ENCODE measurements at regions of chr6 and their contacts with region 1.

Region 1: DNA sequence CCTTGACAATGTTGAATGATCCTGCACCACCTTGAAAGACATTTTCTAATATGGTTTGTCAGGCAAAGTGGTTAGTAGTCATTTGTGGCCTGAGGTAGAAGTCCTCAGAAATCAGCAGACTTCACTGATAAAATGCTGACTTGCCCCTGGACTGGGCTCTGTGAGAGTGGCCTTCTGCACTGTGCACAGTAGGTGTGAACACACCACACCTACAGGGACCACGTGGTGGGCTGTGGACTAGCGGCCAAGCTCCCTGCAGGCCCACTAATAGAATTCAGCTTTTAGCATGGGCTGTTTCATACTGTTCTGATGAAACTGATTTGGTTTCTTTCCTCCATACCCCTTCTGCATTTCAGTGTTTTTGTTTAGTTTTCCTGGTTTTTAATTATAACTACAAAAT is 7.3 kb downstream of the BPHL start:
- DNase-seq: no peak
- ATAC-seq: no peak
- H3K4me3 ChIP-seq: no peak overlapping the region
- H3K27ac ChIP-seq: no peak overlapping the region
- H3K4me1 ChIP-seq: peaks cover 0 to 3% of the 10 kb centered on the region in 2 experiments; a peak in 2 of 4 replicates
- H3K27me3 ChIP-seq: no peaks in the 10 kb centered on the region
- CTCF ChIP-seq: no peak
- POLR2A ChIP-seq: no peak
- RAD21 ChIP-seq: no peak

Region 2: GRCh38 chr6:3209114-3210023 is 83.6 kb after region 1 on chr6:
- CTCF ChIA-PET with region 1: interaction called, 3 read pairs
- POLR2A ChIA-PET with region 1: no interaction called
- RAD21 ChIA-PET with region 1: no interaction called
- intact Hi-C with region 1: loop called (anchors 1 kb)
- DNase-seq: peak; percentile 96
- ATAC-seq: peak; percentile 98
- H3K4me3 ChIP-seq: peak overlapping the region; percentile 33 to 49
- H3K27ac ChIP-seq: peak overlapping the region; percentile 61
- H3K4me1 ChIP-seq: peaks cover 12 to 34% of the 10 kb centered on the region in 2 experiments
- H3K27me3 ChIP-seq: no peaks in the 10 kb centered on the region
- CTCF ChIP-seq: peak in 2 of 3 experiments; percentile 20 to 55; a peak in 1 of 6 replicates
- POLR2A ChIP-seq: no peak
- RAD21 ChIP-seq: peak; percentile 81

Region 3: DNA sequence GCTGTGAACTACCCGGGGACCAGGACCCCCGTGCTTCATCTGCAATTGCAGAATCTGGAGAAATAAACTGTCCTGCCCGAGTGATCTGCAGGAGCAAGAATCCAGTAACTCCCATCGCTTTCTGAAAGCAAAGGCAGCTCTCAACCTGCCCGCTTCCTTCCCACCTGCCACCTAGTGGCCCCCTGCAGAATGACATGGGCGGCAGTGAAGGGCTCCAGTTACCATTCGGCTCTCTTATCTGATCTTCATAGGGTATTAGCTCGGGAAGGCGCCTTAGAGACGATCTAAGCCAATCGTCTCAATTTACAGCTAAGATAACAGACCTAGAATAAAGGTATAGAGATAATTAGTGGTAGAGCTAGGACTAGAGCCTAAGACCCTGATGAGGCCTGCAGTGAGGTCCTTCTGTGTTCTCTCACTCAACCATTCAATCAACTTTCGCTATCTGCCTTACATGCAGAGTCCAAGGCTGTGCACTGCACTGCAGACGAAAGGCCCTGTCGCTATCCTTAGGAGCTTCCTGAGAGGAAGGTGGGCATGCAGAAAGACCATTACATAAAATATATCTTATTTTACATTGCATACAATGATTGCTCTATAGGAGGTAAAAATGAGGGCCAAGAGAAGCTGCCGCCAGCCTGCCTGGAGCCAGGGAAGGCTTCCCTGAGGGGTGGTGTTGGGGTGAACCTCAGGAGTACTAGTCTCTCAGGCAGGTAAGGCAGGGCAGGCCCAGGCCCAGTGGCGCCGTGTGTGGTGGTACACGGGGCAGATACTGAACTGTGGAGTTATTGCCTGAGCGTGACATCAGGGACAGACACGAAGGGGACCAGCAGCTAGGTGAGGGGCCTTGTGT is 125.9 kb after region 1 on chr6:
- CTCF ChIA-PET with region 1: interaction called, 16 read pairs
- POLR2A ChIA-PET with region 1: interaction called, 4 read pairs
- RAD21 ChIA-PET with region 1: interaction called in 1 of 2 experiments, 3 read pairs
- intact Hi-C with region 1: loop called (anchors 1 kb)
- DNase-seq: peak; percentile 66
- ATAC-seq: peak; percentile 87
- H3K4me3 ChIP-seq: peak overlapping the region; percentile 12 to 18
- H3K27ac ChIP-seq: no peak overlapping the region
- H3K4me1 ChIP-seq: peaks cover 0 to 33% of the 10 kb centered on the region in 2 experiments; a peak in 2 of 4 replicates
- H3K27me3 ChIP-seq: no peaks in the 10 kb centered on the region
- CTCF ChIP-seq: peak; percentile 94 to 97 (median 96)
- POLR2A ChIP-seq: no peak
- RAD21 ChIP-seq: peak; percentile 88

Region 4: GRCh38 chr6:3280091-3280490 is 154.3 kb after region 1 on chr6:
- CTCF ChIA-PET with region 1: no interaction called
- POLR2A ChIA-PET with region 1: no interaction called
- RAD21 ChIA-PET with region 1: interaction called in 1 of 2 experiments, 3 read pairs
- intact Hi-C with region 1: loop called (anchors 1 kb)
- DNase-seq: no peak
- ATAC-seq: 0 out of 2 replicates have a peak, but pooled peaks have one; percentile 21
- H3K4me3 ChIP-seq: no peak overlapping the region
- H3K27ac ChIP-seq: no peak overlapping the region
- H3K4me1 ChIP-seq: no peaks in the 10 kb centered on the region
- H3K27me3 ChIP-seq: no peaks in the 10 kb centered on the region
- CTCF ChIP-seq: no peak
- POLR2A ChIP-seq: no peak
- RAD21 ChIP-seq: no peak

Region 5: DNA sequence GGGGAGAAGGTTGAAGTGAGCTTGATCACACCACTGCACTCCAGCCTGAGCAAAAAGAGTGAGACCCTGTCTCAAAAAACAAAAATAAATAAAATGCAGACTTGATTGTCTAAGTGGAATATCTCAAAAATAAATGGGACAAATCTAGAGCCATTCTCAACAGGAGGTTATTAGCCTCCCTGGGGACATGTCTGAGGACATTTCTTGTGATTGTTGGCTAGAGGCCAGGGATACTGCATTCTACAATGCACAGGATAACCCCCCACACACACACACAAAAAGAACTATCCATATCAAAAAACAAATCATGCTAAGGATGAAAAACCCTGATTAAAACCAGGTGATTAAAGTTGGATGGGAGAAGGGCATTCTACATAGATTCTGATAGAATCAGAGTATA is 915.7 kb after region 1 on chr6:
- CTCF ChIA-PET with region 1: no interaction called
- POLR2A ChIA-PET with region 1: no interaction called
- RAD21 ChIA-PET with region 1: no interaction called
- intact Hi-C with region 1: no loop called
- DNase-seq: no peak
- ATAC-seq: no peak
- H3K4me3 ChIP-seq: no peak overlapping the region
- H3K27ac ChIP-seq: no peak overlapping the region
- H3K4me1 ChIP-seq: no peaks in the 10 kb centered on the region
- H3K27me3 ChIP-seq: no peaks in the 10 kb centered on the region
- CTCF ChIP-seq: no peak
- POLR2A ChIP-seq: no peak
- RAD21 ChIP-seq: no peak